Left ventricle myocardium superior (tissue), 1 donor: ENCODE measurements at regions of chr12 and their contacts with region 1.

Region 1: GRCh38 chr12:68856510-68856909 is 48.5 kb downstream of the MDM2 start:
- DNase-seq: no peak
- ATAC-seq: no peak

Region 2: GRCh38 chr12:69068431-69068830 is 211.9 kb after region 1 on chr12:
- intact Hi-C with region 1: loop called (anchors 5 kb)
- DNase-seq: no peak
- ATAC-seq: no peak